SK-N-SH (cell line): ENCODE measurements at regions of chr11 and their contacts with region 1.

Region 1: DNA sequence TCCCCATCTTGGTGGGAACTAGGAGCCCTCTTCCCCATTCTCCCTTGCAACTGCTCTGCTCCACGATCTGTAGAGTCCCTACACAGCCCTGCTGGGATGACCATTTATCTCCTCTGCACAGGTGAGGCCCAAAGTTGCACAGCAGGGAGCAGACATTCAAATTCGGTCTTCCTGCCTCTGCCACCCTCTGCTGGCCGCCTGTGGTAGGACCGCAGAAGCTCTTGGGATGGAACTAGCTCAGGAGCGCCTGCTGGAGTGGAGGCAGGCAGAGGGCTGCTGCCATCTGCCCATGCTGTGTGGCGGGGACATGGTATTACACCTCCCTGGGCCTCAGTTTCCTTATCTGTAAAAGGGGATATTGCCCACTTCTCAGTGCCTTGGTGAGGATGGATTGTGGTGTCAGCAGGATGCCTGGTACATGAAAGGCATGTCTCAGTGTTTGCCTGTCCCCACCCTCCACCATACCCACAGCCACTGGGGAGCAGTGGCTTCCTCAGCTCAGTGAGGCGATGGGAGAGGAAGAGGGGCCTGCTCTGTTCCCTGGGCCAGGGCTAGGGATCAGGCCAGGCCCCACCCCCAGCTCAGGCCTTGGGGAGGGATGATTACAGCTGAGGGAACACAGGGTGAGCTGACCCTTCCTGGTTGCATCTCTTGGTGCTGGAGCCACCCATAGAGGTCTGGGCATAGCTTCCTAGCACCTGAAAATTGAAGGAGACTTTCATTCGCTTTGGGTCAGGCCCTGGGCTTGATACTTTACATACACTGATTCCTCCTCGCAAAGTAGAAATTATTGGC is 11.3 kb upstream of the OMP start:
- DNase-seq: peak; percentile 93
- H3K4me3 ChIP-seq: no peak overlapping the region; a peak in 1 of 4 replicates
- H3K27ac ChIP-seq: no peak overlapping the region
- H3K4me1 ChIP-seq: peaks cover 0 to 21% of the 10 kb centered on the region in 2 experiments; a peak in 1 of 4 replicates
- H3K27me3 ChIP-seq: no peaks in the 10 kb centered on the region
- CTCF ChIP-seq: peak; percentile 89
- EP300 ChIP-seq: no peak
- RAD21 ChIP-seq: peak; percentile 95

Region 2: DNA sequence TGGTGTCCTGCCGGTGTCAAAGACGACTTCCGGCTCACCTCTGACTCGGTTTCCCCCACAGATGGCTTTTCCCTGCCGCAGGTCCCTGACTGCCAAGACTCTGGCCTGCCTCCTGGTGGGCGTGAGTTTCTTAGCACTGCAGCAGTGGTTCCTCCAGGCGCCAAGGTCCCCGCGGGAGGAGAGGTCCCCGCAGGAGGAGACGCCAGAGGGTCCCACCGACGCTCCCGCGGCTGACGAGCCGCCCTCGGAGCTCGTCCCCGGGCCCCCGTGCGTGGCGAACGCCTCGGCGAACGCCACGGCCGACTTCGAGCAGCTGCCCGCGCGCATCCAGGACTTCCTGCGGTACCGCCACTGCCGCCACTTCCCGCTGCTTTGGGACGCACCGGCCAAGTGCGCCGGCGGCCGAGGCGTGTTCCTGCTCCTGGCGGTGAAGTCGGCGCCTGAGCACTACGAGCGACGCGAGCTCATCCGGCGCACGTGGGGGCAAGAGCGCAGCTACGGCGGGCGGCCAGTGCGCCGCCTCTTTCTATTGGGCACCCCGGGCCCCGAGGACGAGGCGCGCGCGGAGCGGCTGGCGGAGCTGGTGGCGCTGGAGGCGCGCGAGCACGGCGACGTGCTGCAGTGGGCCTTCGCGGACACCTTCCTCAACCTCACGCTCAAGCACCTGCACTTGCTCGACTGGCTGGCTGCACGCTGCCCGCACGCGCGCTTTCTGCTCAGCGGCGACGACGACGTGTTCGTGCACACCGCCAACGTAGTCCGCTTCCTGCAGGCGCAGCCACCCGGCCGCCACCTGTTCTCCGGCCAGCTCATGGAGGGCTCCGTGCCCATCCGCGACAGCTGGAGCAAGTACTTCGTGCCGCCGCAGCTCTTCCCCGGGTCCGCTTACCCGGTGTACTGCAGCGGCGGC is 51.6 kb before region 1 on chr11:
- CTCF ChIA-PET with region 1: interaction called, 55 read pairs
- POLR2A ChIA-PET with region 1: no interaction called
- DNase-seq: peak; percentile 81
- H3K4me3 ChIP-seq: peak overlapping the region; percentile 42 to 59
- H3K27ac ChIP-seq: no peak overlapping the region
- H3K4me1 ChIP-seq: peaks cover 0 to 3% of the 10 kb centered on the region in 2 experiments; a peak in 1 of 4 replicates
- H3K27me3 ChIP-seq: no peaks in the 10 kb centered on the region
- CTCF ChIP-seq: peak; percentile 65
- EP300 ChIP-seq: no peak
- RAD21 ChIP-seq: peak; percentile 52

Region 3: GRCh38 chr11:77066229-77067042 is 24.9 kb before region 1 on chr11 and contains the start of gene CAPN5:
- CTCF ChIA-PET with region 1: interaction called, 51 read pairs
- POLR2A ChIA-PET with region 1: no interaction called
- DNase-seq: peak; percentile 99
- H3K4me3 ChIP-seq: peak within 1 kb of the TSS; percentile 81 to 89
- H3K27ac ChIP-seq: peak within 1 kb of the TSS; percentile 69 to 94
- H3K4me1 ChIP-seq: peaks cover 9 to 39% of the 10 kb centered on the region in 2 experiments; a peak in 3 of 4 replicates
- H3K27me3 ChIP-seq: no peaks in the 10 kb centered on the region
- CTCF ChIP-seq: peak; percentile 41
- EP300 ChIP-seq: no peak
- RAD21 ChIP-seq: peak; percentile 32
- polyA plus RNA-seq, gene CAPN5: 31.6 and 33.1 TPM in 2 replicates

Region 4: DNA sequence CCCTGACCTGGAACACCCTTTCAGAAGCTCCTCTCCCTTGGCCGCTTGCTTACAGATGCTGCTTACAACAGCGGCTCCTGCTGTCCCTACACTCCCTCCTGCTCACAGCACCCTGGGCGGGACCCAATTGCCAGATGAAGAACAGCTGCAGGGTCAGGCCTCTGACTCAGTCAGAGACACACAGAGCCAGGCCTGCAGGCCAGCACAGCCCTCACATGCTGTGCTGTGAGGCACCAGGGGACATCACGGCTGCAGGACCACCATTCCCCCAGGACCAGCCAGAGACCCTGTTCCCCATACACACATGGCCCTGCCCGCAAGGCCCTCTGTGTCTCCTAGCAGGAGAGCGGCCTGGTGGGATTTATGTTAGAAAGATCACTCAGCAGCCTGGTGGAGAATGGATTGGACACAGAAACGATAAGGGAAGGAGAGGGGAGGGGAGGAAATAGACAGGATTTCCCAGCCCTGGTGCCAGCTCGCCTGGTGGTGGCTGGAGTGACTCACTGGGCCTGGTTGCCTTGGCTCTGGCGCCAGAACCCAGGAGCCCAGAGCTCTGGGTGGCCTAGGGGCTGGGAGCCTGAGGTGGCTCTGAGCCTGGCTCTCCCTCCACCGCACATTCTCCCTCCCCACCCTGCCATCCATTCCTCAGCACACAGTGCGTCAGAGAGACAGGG is 17.9 kb before region 1 on chr11:
- CTCF ChIA-PET with region 1: interaction called, 66 read pairs
- POLR2A ChIA-PET with region 1: interaction called, 4 read pairs
- DNase-seq: peak; percentile 89
- H3K4me3 ChIP-seq: peak overlapping the region in 1 of 2 experiments; percentile 20; a peak in 1 of 4 replicates
- H3K27ac ChIP-seq: peak overlapping the region; percentile 94 to 97
- H3K4me1 ChIP-seq: peaks cover 38 to 66% of the 10 kb centered on the region in 2 experiments; a peak in 3 of 4 replicates
- H3K27me3 ChIP-seq: no peaks in the 10 kb centered on the region
- CTCF ChIP-seq: peak; percentile 66
- EP300 ChIP-seq: peak in 1 of 2 experiments; percentile 4; a peak in 2 of 4 replicates
- RAD21 ChIP-seq: peak; percentile 59

Region 5: DNA sequence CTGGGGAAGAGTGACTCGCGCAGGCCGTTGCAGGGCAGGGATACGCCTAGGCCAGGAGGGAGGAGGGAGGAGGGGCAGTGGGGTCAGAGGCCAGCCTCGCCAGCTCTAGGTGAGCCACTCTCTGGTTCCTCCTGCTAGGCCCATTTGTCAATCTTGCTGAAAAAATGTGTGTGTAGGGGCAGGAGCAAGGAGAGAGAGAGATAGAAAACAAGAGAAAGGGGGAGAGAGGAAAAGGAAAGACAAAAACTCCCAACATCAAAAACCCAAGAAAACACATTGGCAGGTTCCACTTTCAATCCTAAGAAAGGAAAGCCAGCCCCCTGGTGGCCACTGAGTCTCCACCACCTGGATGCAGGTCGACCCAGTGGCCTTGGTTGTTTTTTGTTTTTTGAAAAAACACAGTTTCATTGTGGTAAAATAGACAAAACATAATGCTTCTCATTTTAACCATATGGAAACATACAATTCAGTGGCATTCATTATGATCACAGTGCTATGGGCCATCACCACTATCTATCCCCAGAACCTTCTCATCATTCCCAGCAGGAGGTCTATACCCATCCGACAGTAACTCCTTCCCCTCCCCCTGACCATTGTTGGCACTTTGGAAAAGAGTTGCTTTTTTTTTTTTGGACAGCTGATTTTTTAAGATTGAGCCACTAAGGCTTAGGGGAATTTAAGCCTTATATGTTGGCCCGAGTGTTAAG is 22.2 kb after region 1 on chr11:
- CTCF ChIA-PET with region 1: interaction called, 49 read pairs
- POLR2A ChIA-PET with region 1: no interaction called
- DNase-seq: peak; percentile 74
- H3K4me3 ChIP-seq: no peak overlapping the region; a peak in 1 of 4 replicates
- H3K27ac ChIP-seq: no peak overlapping the region
- H3K4me1 ChIP-seq: peaks cover 3 to 27% of the 10 kb centered on the region in 2 experiments; a peak in 3 of 4 replicates
- H3K27me3 ChIP-seq: no peaks in the 10 kb centered on the region
- CTCF ChIP-seq: peak; percentile 65
- EP300 ChIP-seq: no peak
- RAD21 ChIP-seq: peak; percentile 67